K562 (cell line): ENCODE measurements at regions of chr12 and their contacts with region 1.

Region 1: DNA sequence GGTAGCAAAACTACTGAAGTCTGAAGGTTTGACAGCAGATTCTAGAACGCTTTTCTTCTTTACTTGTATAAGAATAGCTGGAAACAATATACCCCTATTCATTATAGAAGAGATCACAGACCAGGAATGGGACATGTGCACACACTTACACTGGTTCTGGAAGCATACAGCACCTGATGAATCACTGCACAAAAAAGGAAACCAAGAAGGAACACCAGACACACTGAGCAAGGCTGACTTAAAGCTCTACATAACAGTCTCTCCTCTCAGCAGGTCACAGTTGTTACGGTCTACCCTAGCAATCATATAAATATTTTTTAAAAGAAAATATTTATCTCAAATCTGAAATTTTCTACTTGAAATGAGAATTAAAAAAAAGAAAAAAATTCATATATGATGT is 13.5 kb downstream of the ATP2B1 start:
- DNase-seq: no peak
- ATAC-seq: peak; percentile 34
- H3K4me3 ChIP-seq: no peak overlapping the region
- H3K27ac ChIP-seq: no peak overlapping the region
- H3K4me1 ChIP-seq: peaks cover 0 to 21% of the 10 kb centered on the region in 2 experiments; a peak in 3 of 5 replicates
- H3K27me3 ChIP-seq: no peaks in the 10 kb centered on the region
- CTCF ChIP-seq: no peak
- EP300 ChIP-seq: no peak
- POLR2A ChIP-seq: no peak
- RAD21 ChIP-seq: no peak

Region 2: DNA sequence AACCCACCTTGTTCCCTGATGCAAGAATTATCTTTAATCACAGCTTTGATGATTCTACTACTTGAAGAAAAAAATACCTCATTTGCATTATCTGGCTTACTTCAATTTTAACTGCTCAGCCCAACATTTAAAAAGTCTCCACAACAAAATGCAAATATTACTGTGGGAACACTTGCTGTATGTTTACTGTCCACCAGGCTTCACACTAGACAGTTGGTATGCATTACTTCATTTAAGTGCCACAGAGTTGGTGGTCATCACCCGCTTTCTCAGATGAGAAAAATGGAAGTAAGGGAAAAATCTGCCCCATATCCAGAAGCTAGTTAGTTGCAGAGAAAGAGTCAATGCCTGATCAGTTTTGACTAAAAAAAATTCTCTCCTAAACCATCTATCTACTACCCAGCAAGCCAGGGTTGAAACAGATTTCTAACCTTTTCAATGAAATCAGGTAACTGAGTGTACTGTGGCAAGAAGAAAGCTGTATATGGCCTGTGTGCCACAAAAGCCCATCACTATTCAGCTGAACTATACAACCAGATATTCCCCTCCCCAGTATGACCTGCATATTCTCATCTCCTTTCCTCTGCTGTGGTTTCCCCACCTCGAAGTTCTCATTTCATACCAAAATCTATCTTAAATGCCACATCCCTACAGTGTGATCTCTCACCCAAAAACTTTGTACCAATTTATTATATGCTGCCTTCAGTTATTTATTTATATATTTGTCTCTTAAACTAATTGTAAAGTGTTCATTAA is 76.8 kb before region 1 on chr12:
- CTCF ChIA-PET with region 1: no interaction called
- POLR2A ChIA-PET with region 1: no interaction called
- in situ Hi-C with region 1: no loop called
- intact Hi-C with region 1: loop called (anchors 5 kb)
- DNase-seq: no peak
- ATAC-seq: peak; percentile 59; the same call in 2 of the 3 replicates
- H3K4me3 ChIP-seq: no peak overlapping the region
- H3K27ac ChIP-seq: no peak overlapping the region
- H3K4me1 ChIP-seq: peaks cover 0 to 4% of the 10 kb centered on the region in 2 experiments; a peak in 2 of 5 replicates
- H3K27me3 ChIP-seq: no peaks in the 10 kb centered on the region
- CTCF ChIP-seq: peak in 1 of 3 experiments; percentile 9; a peak in 1 of 6 replicates
- EP300 ChIP-seq: no peak
- POLR2A ChIP-seq: no peak
- RAD21 ChIP-seq: 0 out of 4 replicates have a peak, but pooled peaks of 1 of the 2 experiments have one; percentile 3

Region 3: DNA sequence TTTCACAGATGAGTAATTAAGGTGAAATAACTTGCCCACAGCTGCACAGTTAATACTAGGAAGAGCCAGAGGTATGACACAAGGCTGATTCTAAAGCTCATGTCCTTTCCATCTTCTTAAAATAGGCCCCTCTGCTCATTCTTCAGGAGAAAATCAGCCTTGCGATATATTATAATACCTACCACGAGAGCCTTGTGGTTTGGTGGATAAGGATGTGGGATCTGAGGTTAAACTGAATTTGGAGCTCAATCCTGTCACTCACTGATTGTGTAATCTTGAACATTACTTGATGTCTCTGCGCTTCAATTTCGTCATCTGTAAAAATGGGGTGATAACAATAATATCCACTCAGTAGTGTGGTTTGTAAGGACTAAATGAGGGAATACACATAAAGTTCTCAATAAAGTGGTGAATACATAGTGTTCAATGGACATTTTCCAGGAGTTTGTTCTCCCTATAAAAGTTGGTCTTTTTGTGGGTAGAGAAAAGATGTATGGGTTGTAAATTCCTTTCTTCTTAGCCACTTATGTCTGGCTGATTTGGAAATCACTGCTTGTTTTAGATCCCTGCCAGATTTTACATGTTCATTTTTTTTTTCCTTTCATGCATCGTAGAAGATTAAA is 38.6 kb after region 1 on chr12:
- CTCF ChIA-PET with region 1: no interaction called
- POLR2A ChIA-PET with region 1: no interaction called
- in situ Hi-C with region 1: no loop called
- intact Hi-C with region 1: no loop called
- DNase-seq: peak in 2 of 4 experiments; percentile 8 to 46
- ATAC-seq: peak; percentile 76
- H3K4me3 ChIP-seq: no peak overlapping the region
- H3K27ac ChIP-seq: no peak overlapping the region
- H3K4me1 ChIP-seq: peaks cover 0 to 12% of the 10 kb centered on the region in 2 experiments; a peak in 4 of 5 replicates
- H3K27me3 ChIP-seq: no peaks in the 10 kb centered on the region
- CTCF ChIP-seq: no peak
- EP300 ChIP-seq: peak; percentile 83
- POLR2A ChIP-seq: no peak
- RAD21 ChIP-seq: peak in 1 of 2 experiments; percentile 33; a peak in 1 of 4 replicates

Region 4: GRCh38 chr12:90245391-90245790 is 550.3 kb after region 1 on chr12:
- CTCF ChIA-PET with region 1: no interaction called
- POLR2A ChIA-PET with region 1: no interaction called
- in situ Hi-C with region 1: no loop called
- intact Hi-C with region 1: no loop called
- DNase-seq: no peak
- ATAC-seq: no peak
- H3K4me3 ChIP-seq: no peak overlapping the region
- H3K27ac ChIP-seq: no peak overlapping the region
- H3K4me1 ChIP-seq: no peaks in the 10 kb centered on the region
- H3K27me3 ChIP-seq: no peaks in the 10 kb centered on the region
- CTCF ChIP-seq: no peak
- EP300 ChIP-seq: no peak
- POLR2A ChIP-seq: no peak
- RAD21 ChIP-seq: no peak